Activated CD4-positive, alpha-beta T cell treated with anti-CD3 and anti-CD28 coated beads, Interleukin-2, amount 10 ng/mL, durations not matched to agents 24 days and 14 days (primary cell): ENCODE measurements at regions of chr18 and their contacts with region 1.

Region 1: DNA sequence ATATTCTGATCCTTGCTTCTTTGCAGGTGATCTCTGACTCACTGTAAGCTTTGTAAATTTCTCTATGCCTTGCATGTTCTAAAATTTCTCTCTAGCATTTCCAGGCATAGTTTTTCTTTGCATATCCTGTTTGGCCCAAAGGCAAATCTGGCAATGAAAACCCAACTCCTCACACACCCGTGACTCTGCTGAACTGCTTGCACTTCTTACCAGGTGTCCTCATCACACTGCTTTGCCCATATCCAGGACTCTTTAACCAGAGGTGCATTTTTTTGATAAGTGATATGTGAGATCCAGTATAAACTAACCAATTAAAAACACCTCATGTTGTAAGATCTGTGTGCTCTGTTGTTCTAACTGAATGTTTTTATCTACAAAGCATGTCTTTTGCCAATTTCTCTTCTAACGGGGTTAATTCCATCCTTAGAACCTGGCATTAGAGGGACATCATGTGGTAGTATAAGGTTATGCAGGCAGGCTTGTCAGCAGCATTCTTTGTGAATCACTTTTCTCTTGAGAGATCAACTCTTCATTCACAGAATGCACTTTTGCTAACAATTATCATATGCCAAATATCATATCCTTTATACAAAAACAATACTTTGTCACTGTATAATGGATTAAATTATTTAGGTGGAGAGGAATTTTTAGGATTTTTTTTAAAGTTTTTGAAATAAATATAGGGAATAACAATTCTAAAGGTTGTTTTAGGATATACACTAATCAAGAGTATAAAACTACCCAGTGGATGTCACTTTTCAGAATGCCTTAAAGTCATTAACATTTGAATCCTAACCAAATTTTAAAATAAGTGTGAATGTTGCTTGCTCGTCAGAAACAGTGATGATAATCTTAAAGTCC is 20.8 kb upstream of the TMX3 start:
- DNase-seq: peak; percentile 75
- H3K4me3 Mint-ChIP-seq: no peak overlapping the region
- H3K27ac Mint-ChIP-seq: no peak overlapping the region
- H3K4me1 Mint-ChIP-seq: no peaks in the 10 kb centered on the region
- H3K27me3 Mint-ChIP-seq: peaks cover 3% of the 10 kb centered on the region

Region 2: DNA sequence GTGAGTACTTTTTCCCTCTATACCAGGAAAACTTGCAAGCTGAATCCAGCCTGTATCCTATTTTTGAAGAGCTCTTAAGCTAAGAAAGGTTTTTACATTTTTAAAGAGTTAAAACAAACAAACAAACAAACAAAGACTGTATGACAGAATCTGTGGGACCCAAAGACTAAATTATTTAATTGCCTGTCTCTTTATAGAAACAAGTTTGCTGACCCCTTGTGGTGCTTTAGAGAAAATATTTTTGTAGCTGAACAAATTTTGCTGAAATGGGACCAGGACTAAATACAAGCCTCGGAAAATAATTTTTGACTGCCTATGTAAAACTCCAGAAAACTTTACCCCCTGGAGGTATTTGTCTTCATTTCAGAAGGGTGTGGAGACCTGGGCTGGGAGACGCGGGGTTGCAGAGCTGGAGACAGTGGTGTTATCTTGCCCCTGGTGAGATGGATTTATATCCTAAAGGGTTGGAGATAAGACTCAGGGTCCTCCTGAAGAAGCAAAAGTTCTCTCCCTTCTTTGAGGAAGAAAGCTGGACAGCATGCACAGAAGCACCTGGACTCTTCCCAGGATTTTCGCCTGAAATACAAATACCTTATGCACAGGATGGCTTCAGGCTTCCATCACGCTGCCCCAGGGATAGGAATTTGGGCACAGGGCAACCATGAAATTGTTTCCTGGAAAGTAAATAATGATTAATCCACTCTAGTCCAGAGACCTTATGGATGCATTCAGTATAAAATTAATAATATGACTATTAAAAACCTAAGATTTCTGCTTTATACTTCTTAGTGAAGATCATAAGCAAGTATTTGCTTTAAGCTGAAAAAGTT is 75.1 kb before region 1 on chr18:
- intact Hi-C with region 1: loop called (anchors 5 kb)
- DNase-seq: peak; percentile 52
- H3K4me3 Mint-ChIP-seq: no peak overlapping the region
- H3K27ac Mint-ChIP-seq: no peak overlapping the region
- H3K4me1 Mint-ChIP-seq: no peaks in the 10 kb centered on the region
- H3K27me3 Mint-ChIP-seq: peaks cover 16% of the 10 kb centered on the region

Region 3: GRCh38 chr18:68703326-68703725 is 32.4 kb before region 1 on chr18:
- intact Hi-C with region 1: no loop called
- DNase-seq: no peak
- H3K4me3 Mint-ChIP-seq: no peak overlapping the region
- H3K27ac Mint-ChIP-seq: no peak overlapping the region
- H3K4me1 Mint-ChIP-seq: peaks cover 27% of the 10 kb centered on the region
- H3K27me3 Mint-ChIP-seq: no peaks in the 10 kb centered on the region

Region 4: GRCh38 chr18:68940754-68941153 is 205.0 kb after region 1 on chr18:
- intact Hi-C with region 1: no loop called
- DNase-seq: no peak
- H3K4me3 Mint-ChIP-seq: no peak overlapping the region
- H3K27ac Mint-ChIP-seq: no peak overlapping the region
- H3K4me1 Mint-ChIP-seq: no peaks in the 10 kb centered on the region
- H3K27me3 Mint-ChIP-seq: no peaks in the 10 kb centered on the region

Region 5: GRCh38 chr18:69968039-69968438 is 1232.3 kb after region 1 on chr18:
- intact Hi-C with region 1: no loop called
- DNase-seq: peak; percentile 81
- H3K4me3 Mint-ChIP-seq: no peak overlapping the region
- H3K27ac Mint-ChIP-seq: no peak overlapping the region
- H3K4me1 Mint-ChIP-seq: peaks cover 10% of the 10 kb centered on the region
- H3K27me3 Mint-ChIP-seq: no peaks in the 10 kb centered on the region